Prostate gland (tissue), 2 donors: ENCODE measurements at regions of chr3 and their contacts with region 1.

Region 1: GRCh38 chr3:55746808-55747413 is 259.8 kb upstream of the WNT5A start:
- DNase-seq: no peak
- H3K4me3 ChIP-seq: no peak overlapping the region
- H3K27ac ChIP-seq: no peak overlapping the region
- H3K4me1 ChIP-seq: no peaks in the 10 kb centered on the region
- H3K27me3 ChIP-seq: no peaks in the 10 kb centered on the region
- CTCF ChIP-seq: peak in 3 of 4 experiments; percentile 28 to 46 (median 29)
- POLR2A ChIP-seq: no peak

Region 2: GRCh38 chr3:54853573-54854404 is 893.1 kb before region 1 on chr3:
- intact Hi-C with region 1: loop called (anchors 10 kb)
- DNase-seq: peak; percentile 64
- H3K4me3 ChIP-seq: no peak overlapping the region
- H3K27ac ChIP-seq: no peak overlapping the region
- H3K4me1 ChIP-seq: no peaks in the 10 kb centered on the region
- H3K27me3 ChIP-seq: no peaks in the 10 kb centered on the region
- CTCF ChIP-seq: peak; percentile 78 to 88 (median 83)
- POLR2A ChIP-seq: no peak

Region 3: GRCh38 chr3:55826731-55827496 is 80.0 kb after region 1 on chr3:
- intact Hi-C with region 1: no loop called
- DNase-seq: no peak
- H3K4me3 ChIP-seq: no peak overlapping the region
- H3K27ac ChIP-seq: no peak overlapping the region
- H3K4me1 ChIP-seq: no peaks in the 10 kb centered on the region
- H3K27me3 ChIP-seq: no peaks in the 10 kb centered on the region
- CTCF ChIP-seq: no peak
- POLR2A ChIP-seq: no peak

Region 4: DNA sequence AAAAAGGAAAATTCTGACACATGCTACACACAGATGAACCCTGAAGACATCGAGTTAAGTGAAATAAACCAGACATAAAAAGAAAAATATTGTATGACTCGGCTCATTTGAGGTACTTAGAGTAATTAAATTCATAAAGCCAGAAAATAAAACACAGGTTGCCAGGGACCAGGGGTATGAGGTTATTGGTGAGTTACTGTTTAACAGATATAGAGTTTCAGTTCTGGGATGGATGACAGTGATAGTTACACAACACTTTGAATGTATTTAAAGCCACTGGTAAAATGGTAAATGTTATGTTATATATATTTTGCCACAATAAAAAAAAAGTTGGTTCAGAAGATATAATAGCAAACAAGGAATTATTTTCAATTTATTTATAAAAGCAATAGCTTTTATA is 176.3 kb after region 1 on chr3:
- intact Hi-C with region 1: no loop called
- DNase-seq: no peak
- H3K4me3 ChIP-seq: no peak overlapping the region
- H3K27ac ChIP-seq: no peak overlapping the region
- H3K4me1 ChIP-seq: no peaks in the 10 kb centered on the region
- H3K27me3 ChIP-seq: no peaks in the 10 kb centered on the region
- CTCF ChIP-seq: no peak
- POLR2A ChIP-seq: no peak